ENCODE measurements at regions of chr11 and their contacts with region 1.

Region 1: DNA sequence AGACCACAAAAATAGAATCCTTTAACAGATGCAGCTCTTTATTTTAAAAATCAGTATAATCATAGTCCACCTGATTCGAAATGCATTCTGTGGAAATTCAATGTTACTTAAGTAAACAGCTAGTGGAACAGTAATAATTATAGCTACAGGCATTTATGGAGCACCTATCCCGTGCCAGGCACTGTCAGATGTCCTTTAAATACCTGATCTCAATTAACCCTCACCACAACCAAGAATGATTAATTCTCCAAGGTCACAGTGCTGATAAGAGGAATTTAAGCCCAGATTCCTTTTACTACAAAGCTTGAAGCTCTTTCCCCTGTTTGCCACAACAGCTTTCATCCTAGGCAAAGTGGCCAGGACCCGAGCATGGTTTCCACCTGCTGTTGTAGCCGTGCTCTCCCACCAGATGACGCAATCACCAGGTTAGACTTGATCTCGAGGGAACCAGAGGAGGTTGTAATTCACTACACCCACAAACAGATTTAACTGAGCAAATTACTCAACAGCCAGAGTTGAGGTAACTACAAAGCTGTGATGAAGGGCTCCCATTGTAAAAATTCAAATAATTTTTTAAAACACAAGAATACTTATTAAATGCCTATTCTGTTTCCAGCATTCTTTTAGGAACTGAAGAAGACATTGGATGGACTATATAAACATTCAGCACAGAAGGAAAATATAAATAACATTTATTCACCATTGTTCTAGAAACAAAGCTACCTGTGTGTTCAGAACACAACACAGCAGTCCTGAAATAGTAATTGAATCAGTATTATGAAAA is 10.3 kb downstream of the PRDM10 start:
- DNase-seq: peak; percentile 60 to 83
- H3K4me3 ChIP-seq: no peak overlapping the region
- H3K27ac ChIP-seq: no peak overlapping the region
- H3K4me1 ChIP-seq: peaks cover 0 to 51% (median 24%) of the 10 kb centered on the region in 4 donors
- H3K27me3 ChIP-seq: no peaks in the 10 kb centered on the region
- CTCF ChIP-seq: peak in 4 of 7 experiments; percentile 10 to 36 (median 23)
- EP300 ChIP-seq: no peak
- POLR2A ChIP-seq: no peak

Region 2: GRCh38 chr11:130069684-130070108 is 77.3 kb after region 1 on chr11 and contains the start of gene APLP2:
- intact Hi-C with region 1: loop called (anchors 5 kb)
- DNase-seq: peak; percentile 99
- H3K4me3 ChIP-seq: peak within 1 kb of the TSS; percentile 86 to 94 (median 90)
- H3K27ac ChIP-seq: peak within 1 kb of the TSS; percentile 92 to 99 (median 97)
- H3K4me1 ChIP-seq: peaks cover 17 to 36% (median 30%) of the 10 kb centered on the region in 4 donors
- H3K27me3 ChIP-seq: no peaks in the 10 kb centered on the region
- CTCF ChIP-seq: no peak
- EP300 ChIP-seq: no peak
- POLR2A ChIP-seq: peak in 2 of 4 donors; percentile 59 to 80
- total RNA-seq, gene APLP2: 89.9 to 563 (median 217) TPM

Region 3: DNA sequence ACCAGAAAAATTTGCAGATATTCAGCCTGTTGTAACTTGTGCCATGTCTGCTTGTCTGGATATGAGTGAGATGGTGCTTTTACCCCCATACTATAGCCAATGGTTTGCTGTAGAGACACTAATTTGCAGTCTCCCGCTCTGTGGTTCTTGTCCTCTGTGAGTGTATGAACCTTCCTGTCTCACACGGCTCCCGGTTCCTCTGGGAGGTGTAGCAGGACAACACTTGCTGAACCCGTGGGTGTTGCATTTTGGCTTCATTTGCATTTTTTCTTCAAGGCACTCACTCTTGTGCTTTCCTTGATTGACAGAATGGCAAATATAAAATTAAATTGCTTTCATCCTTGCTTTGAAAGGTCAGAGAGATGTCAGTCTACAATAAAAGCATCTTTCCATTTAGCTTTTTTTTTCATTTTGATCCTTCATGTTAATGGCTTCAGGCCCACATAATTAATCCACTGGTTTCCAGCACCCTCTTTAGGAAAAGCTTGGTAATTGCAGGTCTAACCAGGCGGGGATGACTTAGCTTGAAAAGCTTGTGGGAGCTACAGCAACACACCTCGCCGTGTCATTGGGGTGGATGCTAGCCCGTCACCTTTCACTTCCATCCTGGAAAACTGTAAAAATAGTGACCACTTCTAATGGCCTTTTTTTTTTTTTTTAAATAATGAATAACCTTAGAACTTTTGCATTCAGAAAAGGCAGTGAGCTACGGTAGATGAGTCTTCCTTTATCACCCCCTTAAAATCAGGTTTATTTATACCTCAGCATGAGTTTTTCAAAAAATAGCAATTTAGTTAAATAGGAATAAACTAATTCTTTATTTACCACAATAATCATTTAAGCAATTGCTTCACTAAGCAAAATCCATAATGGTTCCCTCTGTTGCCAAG is 139.9 kb after region 1 on chr11:
- intact Hi-C with region 1: loop called (anchors 10 kb)
- DNase-seq: peak; percentile 41 to 86
- H3K4me3 ChIP-seq: no peak overlapping the region
- H3K27ac ChIP-seq: no peak overlapping the region
- H3K4me1 ChIP-seq: no peaks in the 10 kb centered on the region
- H3K27me3 ChIP-seq: no peaks in the 10 kb centered on the region
- CTCF ChIP-seq: peak in 5 of 7 experiments; percentile 74 to 86 (median 82)
- EP300 ChIP-seq: no peak
- POLR2A ChIP-seq: no peak